MCF 10A (cell line): ENCODE measurements at regions of chr2 and their contacts with region 1.

Region 1: GRCh38 chr2:156341452-156342253 is 9.1 kb upstream of the NR4A2 start:
- DNase-seq: peak; percentile 98
- H3K4me3 Mint-ChIP-seq: peak overlapping the region; percentile 91
- H3K27ac Mint-ChIP-seq: peak overlapping the region; percentile 98
- H3K4me1 Mint-ChIP-seq: peaks cover 16% of the 10 kb centered on the region
- H3K27me3 Mint-ChIP-seq: no peaks in the 10 kb centered on the region
- CTCF ChIP-seq: no peak

Region 2: GRCh38 chr2:155714983-155715382 is 626.7 kb before region 1 on chr2:
- CTCF ChIA-PET with region 1: no interaction called
- POLR2A ChIA-PET with region 1: no interaction called
- intact Hi-C with region 1: no loop called
- DNase-seq: no peak
- H3K4me3 Mint-ChIP-seq: no peak overlapping the region
- H3K27ac Mint-ChIP-seq: no peak overlapping the region
- H3K4me1 Mint-ChIP-seq: no peaks in the 10 kb centered on the region
- H3K27me3 Mint-ChIP-seq: no peaks in the 10 kb centered on the region
- CTCF ChIP-seq: no peak

Region 3: GRCh38 chr2:156046900-156047299 is 294.8 kb before region 1 on chr2:
- CTCF ChIA-PET with region 1: no interaction called
- POLR2A ChIA-PET with region 1: no interaction called
- intact Hi-C with region 1: no loop called
- DNase-seq: no peak
- H3K4me3 Mint-ChIP-seq: no peak overlapping the region
- H3K27ac Mint-ChIP-seq: no peak overlapping the region
- H3K4me1 Mint-ChIP-seq: peaks cover 7% of the 10 kb centered on the region
- H3K27me3 Mint-ChIP-seq: no peaks in the 10 kb centered on the region
- CTCF ChIP-seq: no peak

Region 4: GRCh38 chr2:156356014-156356754 is 14.5 kb after region 1 on chr2:
- CTCF ChIA-PET with region 1: interaction called, 3 read pairs
- POLR2A ChIA-PET with region 1: interaction called, 13 read pairs
- intact Hi-C with region 1: no loop called
- DNase-seq: peak; percentile 62
- H3K4me3 Mint-ChIP-seq: no peak overlapping the region
- H3K27ac Mint-ChIP-seq: no peak overlapping the region
- H3K4me1 Mint-ChIP-seq: peaks cover 5% of the 10 kb centered on the region
- H3K27me3 Mint-ChIP-seq: no peaks in the 10 kb centered on the region
- CTCF ChIP-seq: no peak

Region 5: DNA sequence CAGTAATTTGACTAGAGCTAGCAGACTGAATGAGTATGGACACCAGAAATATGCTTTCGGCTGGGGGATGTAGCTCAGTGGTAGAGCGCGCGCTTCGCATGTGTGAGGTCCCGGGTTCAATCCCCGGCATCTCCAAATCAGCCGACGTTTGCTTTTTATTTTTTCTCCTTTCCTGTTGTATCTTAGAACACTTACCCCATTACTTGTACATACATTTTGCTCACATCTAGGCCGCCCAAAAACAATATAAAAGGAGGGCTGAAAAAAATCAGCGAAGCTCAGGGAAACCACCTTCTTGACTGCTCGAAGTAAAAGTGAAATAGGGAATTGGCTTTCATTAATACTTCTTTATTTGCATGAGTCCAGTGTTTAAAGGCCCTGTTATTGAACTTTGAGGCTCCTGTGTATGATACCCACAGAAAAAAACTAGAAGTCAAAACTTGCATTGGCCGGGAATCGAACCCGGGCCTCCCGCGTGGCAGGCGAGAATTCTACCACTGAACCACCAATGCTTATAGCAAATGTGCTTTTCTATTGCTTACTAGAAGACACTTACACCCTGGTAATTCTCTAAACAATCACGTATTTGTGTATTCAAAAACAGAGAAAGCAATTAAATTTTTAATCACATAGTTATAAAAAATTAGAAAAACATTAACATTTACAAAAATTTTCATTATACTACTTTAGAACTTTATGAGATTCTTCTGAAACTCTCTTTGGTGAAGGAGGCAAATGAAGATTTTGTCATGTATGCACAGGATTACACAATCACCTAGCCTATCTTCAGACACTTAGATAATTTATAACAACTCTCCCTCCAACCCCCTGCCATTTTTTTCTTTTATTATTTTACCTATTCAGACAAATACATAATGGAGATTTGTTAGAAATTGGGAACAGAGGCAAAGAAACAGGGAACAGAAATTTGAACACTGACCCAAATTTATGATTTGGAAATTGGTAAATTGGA is 59.3 kb after region 1 on chr2:
- CTCF ChIA-PET with region 1: interaction called, 3 read pairs
- POLR2A ChIA-PET with region 1: interaction called, 73 read pairs
- intact Hi-C with region 1: loop called (anchors 1 kb)
- DNase-seq: peak; percentile 78
- H3K4me3 Mint-ChIP-seq: peak overlapping the region; percentile 78
- H3K27ac Mint-ChIP-seq: peak overlapping the region; percentile 96
- H3K4me1 Mint-ChIP-seq: peaks cover 26% of the 10 kb centered on the region
- H3K27me3 Mint-ChIP-seq: no peaks in the 10 kb centered on the region
- CTCF ChIP-seq: no peak

Region 6: DNA sequence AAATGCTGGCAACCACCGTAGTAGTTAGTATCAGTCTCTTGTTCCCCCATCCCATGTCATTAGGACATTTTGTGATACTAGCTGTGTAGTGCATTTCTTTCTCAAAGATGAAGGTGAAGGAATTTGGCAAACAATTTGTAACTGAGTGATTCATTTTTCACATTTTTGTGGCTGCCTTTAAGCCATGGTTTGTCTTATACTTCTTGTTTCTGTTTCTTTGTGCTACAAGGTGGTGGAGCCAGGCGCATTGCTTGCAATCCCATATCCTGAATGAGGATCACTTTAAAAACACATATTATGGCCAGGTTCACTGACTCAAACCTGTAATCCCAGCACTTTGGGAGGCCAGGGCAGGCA is 135.2 kb after region 1 on chr2:
- CTCF ChIA-PET with region 1: interaction called, 3 read pairs
- POLR2A ChIA-PET with region 1: interaction called, 17 read pairs
- intact Hi-C with region 1: no loop called
- DNase-seq: peak; percentile 61
- H3K4me3 Mint-ChIP-seq: peak overlapping the region; percentile 65
- H3K27ac Mint-ChIP-seq: peak overlapping the region; percentile 93
- H3K4me1 Mint-ChIP-seq: peaks cover 29% of the 10 kb centered on the region
- H3K27me3 Mint-ChIP-seq: no peaks in the 10 kb centered on the region
- CTCF ChIP-seq: no peak

Region 7: GRCh38 chr2:156892467-156893281 is 551.0 kb after region 1 on chr2:
- CTCF ChIA-PET with region 1: interaction called, 5 read pairs
- POLR2A ChIA-PET with region 1: interaction called, 12 read pairs
- intact Hi-C with region 1: no loop called
- DNase-seq: peak; percentile 80
- H3K4me3 Mint-ChIP-seq: peak overlapping the region; percentile 69
- H3K27ac Mint-ChIP-seq: peak overlapping the region; percentile 6
- H3K4me1 Mint-ChIP-seq: peaks cover 20% of the 10 kb centered on the region
- H3K27me3 Mint-ChIP-seq: no peaks in the 10 kb centered on the region
- CTCF ChIP-seq: peak; percentile 39